GM12878 (cell line): ENCODE measurements at regions of chr6 and their contacts with region 1.

Region 1: GRCh38 chr6:15936503-15936902 is 192.4 kb upstream of the MYLIP start:
- DNase-seq: peak; percentile 75
- ATAC-seq: peak; percentile 97
- H3K4me3 ChIP-seq: no peak overlapping the region
- H3K27ac ChIP-seq: 0 out of 2 replicates have a peak overlapping the region, but pooled peaks have one; percentile 13
- H3K4me1 ChIP-seq: peaks cover 9% of the 10 kb centered on the region
- H3K27me3 ChIP-seq: no peaks in the 10 kb centered on the region
- CTCF ChIP-seq: no peak
- EP300 ChIP-seq: peak in 1 of 2 experiments; percentile 65; a peak in 1 of 4 replicates
- POLR2A ChIP-seq: no peak
- RAD21 ChIP-seq: no peak

Region 2: GRCh38 chr6:15948930-15949900 is 12.7 kb after region 1 on chr6:
- CTCF ChIA-PET with region 1: interaction called, 4 read pairs
- POLR2A ChIA-PET with region 1: interaction called, 6 read pairs
- RAD21 ChIA-PET with region 1: interaction called, 3 read pairs
- SMC1A ChIA-PET with region 1: interaction called, 10 read pairs
- in situ Hi-C with region 1: no loop called
- intact Hi-C with region 1: no loop called
- DNase-seq: no peak
- ATAC-seq: no peak
- H3K4me3 ChIP-seq: no peak overlapping the region
- H3K27ac ChIP-seq: no peak overlapping the region
- H3K4me1 ChIP-seq: peaks cover 19% of the 10 kb centered on the region
- H3K27me3 ChIP-seq: no peaks in the 10 kb centered on the region
- CTCF ChIP-seq: no peak
- EP300 ChIP-seq: no peak
- POLR2A ChIP-seq: no peak
- RAD21 ChIP-seq: no peak

Region 3: GRCh38 chr6:15955944-15956735 is 19.6 kb after region 1 on chr6:
- CTCF ChIA-PET with region 1: interaction called, 4 read pairs
- POLR2A ChIA-PET with region 1: interaction called, 3 read pairs
- RAD21 ChIA-PET with region 1: interaction called, 3 read pairs
- SMC1A ChIA-PET with region 1: interaction called, 10 read pairs
- in situ Hi-C with region 1: no loop called
- intact Hi-C with region 1: no loop called
- DNase-seq: no peak
- ATAC-seq: no peak
- H3K4me3 ChIP-seq: no peak overlapping the region
- H3K27ac ChIP-seq: no peak overlapping the region
- H3K4me1 ChIP-seq: peaks cover 28% of the 10 kb centered on the region
- H3K27me3 ChIP-seq: no peaks in the 10 kb centered on the region
- CTCF ChIP-seq: no peak
- EP300 ChIP-seq: no peak
- POLR2A ChIP-seq: no peak
- RAD21 ChIP-seq: no peak

Region 4: GRCh38 chr6:16018626-16019025 is 82.1 kb after region 1 on chr6:
- CTCF ChIA-PET with region 1: no interaction called
- POLR2A ChIA-PET with region 1: no interaction called
- RAD21 ChIA-PET with region 1: no interaction called
- SMC1A ChIA-PET with region 1: no interaction called
- in situ Hi-C with region 1: no loop called
- intact Hi-C with region 1: no loop called
- DNase-seq: no peak
- ATAC-seq: no peak
- H3K4me3 ChIP-seq: no peak overlapping the region
- H3K27ac ChIP-seq: no peak overlapping the region
- H3K4me1 ChIP-seq: no peaks in the 10 kb centered on the region
- H3K27me3 ChIP-seq: no peaks in the 10 kb centered on the region
- CTCF ChIP-seq: no peak
- EP300 ChIP-seq: no peak
- POLR2A ChIP-seq: no peak
- RAD21 ChIP-seq: no peak

Region 5: GRCh38 chr6:16028966-16029365 is 92.5 kb after region 1 on chr6:
- CTCF ChIA-PET with region 1: no interaction called
- POLR2A ChIA-PET with region 1: no interaction called
- RAD21 ChIA-PET with region 1: no interaction called
- SMC1A ChIA-PET with region 1: no interaction called
- in situ Hi-C with region 1: no loop called
- intact Hi-C with region 1: no loop called
- DNase-seq: no peak
- ATAC-seq: no peak
- H3K4me3 ChIP-seq: no peak overlapping the region
- H3K27ac ChIP-seq: no peak overlapping the region
- H3K4me1 ChIP-seq: no peaks in the 10 kb centered on the region
- H3K27me3 ChIP-seq: no peaks in the 10 kb centered on the region
- CTCF ChIP-seq: no peak
- EP300 ChIP-seq: no peak
- POLR2A ChIP-seq: no peak
- RAD21 ChIP-seq: no peak